ENCODE measurements at regions of chr1 and their contacts with region 1.

Region 1: GRCh38 chr1:29033829-29034466 is 89.8 kb downstream of the TMEM200B start:
- DNase-seq: peak in 1 of 3 donors; percentile 4
- ATAC-seq: peak; percentile 66
- H3K4me3 ChIP-seq: no peak overlapping the region
- H3K4me1 ChIP-seq: no peaks in the 10 kb centered on the region
- CTCF ChIP-seq: peak; percentile 23

Region 2: DNA sequence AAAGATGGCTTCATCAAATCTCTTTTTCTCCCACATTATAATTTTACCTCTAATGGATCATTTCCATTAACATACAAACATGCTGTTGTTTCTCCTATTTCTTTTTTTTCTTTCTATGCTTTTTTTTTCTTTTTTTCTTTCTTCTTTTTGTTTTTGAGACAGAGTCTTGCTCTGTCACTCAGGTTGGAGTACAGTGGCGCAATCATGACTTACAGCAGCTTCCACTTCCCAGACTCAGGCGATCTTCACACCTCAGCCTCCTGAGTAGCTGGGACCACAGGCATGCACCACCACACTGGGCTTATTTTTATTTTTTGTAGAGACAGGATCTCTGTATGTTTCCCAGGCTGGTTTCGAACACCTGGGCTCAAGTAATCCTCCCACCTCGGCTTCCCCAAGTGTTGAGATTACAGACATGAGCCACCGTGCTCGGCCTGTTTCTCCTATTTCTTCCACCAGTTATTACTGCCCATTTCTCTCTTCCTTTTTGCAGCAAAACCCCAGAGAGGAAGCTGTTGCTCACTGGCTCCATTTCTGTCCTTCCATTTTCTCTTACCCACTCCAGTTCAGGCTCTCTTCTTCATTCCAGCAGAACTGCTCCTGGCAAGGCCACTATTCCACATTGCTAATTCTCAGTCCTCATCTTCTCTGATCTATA is 254.1 kb before region 1 on chr1:
- intact Hi-C with region 1: loop called in 1 of 2 experiments (anchors 10 kb)
- DNase-seq: no peak
- ATAC-seq: no peak
- H3K4me3 ChIP-seq: no peak overlapping the region
- H3K4me1 ChIP-seq: no peaks in the 10 kb centered on the region
- CTCF ChIP-seq: no peak

Region 3: DNA sequence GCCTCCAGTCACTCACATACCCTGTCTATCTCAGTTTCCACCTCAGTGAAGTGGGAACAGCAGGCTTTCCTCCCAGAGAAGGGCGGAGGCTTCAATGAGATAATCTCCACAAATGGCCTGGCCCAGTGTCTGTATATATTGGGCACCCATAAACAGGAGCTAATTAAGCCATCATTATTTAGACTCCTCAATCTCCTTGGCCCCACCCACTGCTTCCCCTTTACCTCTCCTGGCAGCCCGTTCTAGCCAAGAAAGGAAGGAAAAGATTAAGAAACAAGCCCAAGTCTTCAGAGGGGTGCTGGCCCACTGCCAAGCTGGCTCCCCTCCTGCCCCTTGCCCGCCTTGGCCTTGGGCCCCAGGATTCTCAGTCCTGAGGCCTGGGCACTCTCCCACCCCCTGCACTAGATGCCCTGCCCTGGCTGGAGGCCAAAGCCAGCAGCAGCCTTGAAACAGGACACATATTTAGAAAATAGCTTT is 135.5 kb before region 1 on chr1:
- intact Hi-C with region 1: no loop called
- DNase-seq: no peak
- ATAC-seq: no peak
- H3K4me3 ChIP-seq: no peak overlapping the region
- H3K4me1 ChIP-seq: no peaks in the 10 kb centered on the region
- CTCF ChIP-seq: no peak

Region 4: DNA sequence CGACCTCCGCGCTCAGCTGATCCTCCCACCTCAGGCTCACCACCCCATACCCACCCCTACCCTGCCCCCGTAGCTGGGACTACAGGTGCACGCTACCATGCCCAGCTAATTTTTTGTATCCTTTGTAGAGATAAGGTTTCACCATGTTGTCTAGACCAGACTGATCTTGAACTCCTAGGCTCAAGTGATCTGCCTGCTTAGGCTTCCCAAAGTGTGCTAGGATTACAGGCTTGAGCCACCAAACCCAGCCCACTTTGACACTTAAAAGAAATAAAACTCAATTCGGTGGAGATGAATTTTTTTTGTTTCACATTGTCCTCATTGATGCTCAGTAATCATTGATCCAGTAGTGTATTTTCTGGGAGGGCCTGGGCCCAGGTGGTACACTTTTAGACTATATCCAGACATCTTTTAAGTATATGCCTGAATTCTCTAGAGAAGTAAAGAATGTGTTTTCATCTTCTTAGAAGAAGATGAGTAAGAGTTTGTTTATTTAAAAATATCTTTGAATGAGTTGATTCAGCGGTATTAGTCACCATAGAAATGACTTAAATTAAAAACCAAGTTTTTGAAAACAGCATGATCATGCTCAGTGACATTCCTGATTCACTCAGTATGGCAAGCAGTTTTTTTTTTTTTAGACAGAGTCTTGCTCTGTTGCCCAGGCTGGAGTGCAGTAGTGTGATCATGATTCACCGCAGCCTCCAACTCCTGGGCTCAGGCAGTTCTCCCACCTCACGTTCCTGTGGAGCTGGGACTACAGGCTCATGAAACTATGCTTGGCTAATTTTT is 61.8 kb before region 1 on chr1:
- intact Hi-C with region 1: no loop called
- DNase-seq: no peak
- ATAC-seq: peak; percentile 38
- H3K4me3 ChIP-seq: no peak overlapping the region
- H3K4me1 ChIP-seq: peaks cover 12% of the 10 kb centered on the region
- CTCF ChIP-seq: no peak